ENCODE measurements at regions of chr10 and their contacts with region 1.

Region 1: DNA sequence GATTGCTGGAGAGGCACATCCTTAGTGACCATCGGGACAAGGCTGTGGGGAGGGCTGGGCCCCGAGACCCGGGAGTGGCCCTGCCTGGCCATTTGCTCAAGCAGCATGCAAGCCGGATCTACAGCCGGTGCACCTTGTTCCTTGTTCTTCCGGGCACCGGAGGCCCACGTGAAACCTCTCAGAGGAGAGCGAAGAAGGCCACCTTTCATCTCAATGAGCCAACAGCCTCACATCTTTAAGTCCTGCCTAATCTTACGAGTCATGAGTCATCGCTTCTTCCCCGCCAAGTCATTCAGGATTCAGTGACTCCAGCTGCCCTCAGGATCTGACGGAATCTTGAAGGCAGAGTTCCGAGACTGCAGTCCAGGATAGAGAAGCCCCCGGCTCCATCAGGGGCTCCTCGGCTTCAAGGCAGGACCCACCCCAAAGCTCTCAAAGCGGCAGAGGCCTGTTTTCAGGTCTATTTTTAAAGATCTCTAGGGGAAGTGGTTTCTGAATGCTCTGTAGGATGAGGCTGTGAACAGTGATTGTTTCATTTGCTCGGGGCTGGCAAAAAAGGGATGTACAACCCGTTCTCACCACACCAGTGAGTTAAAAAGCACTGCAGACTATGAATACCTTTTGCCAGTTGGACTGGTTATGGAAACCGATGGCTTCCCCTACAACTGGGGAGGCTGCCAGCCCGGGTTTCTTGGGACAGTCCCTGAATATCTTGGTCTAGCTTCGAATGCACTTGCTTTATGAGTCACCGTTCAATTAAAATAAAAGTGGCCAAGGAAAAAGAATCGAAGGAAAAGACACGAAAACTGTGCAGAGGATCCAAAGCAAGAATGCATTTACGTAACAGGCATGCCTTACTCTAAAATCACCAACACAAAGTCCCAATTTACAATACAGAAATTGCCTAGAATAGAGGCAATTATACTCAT is 57.2 kb upstream of the ECHDC3 start:
- DNase-seq: peak; percentile 91
- ATAC-seq: peak; percentile 74
- H3K4me3 ChIP-seq: peak overlapping the region; percentile 39 to 63 (median 58)
- H3K4me3 Mint-ChIP-seq: peak overlapping the region; percentile 93
- H3K27ac ChIP-seq: peak overlapping the region; percentile 96 to 98
- H3K27ac Mint-ChIP-seq: peak overlapping the region; percentile 99
- H3K4me1 ChIP-seq: peaks cover 81 to 90% of the 10 kb centered on the region in 2 donors
- H3K4me1 Mint-ChIP-seq: peaks cover 90% of the 10 kb centered on the region
- H3K27me3 ChIP-seq: no peaks in the 10 kb centered on the region
- H3K27me3 Mint-ChIP-seq: no peaks in the 10 kb centered on the region
- CTCF ChIP-seq: no peak

Region 2: GRCh38 chr10:11424456-11425297 is 260.3 kb before region 1 on chr10:
- CTCF ChIA-PET with region 1: no interaction called
- POLR2A ChIA-PET with region 1: no interaction called
- intact Hi-C with region 1: no loop called
- DNase-seq: peak; percentile 28
- ATAC-seq: no peak
- H3K4me3 ChIP-seq: no peak overlapping the region
- H3K4me3 Mint-ChIP-seq: no peak overlapping the region
- H3K27ac ChIP-seq: no peak overlapping the region
- H3K27ac Mint-ChIP-seq: no peak overlapping the region
- H3K4me1 ChIP-seq: no peaks in the 10 kb centered on the region
- H3K4me1 Mint-ChIP-seq: no peaks in the 10 kb centered on the region
- H3K27me3 ChIP-seq: no peaks in the 10 kb centered on the region
- H3K27me3 Mint-ChIP-seq: no peaks in the 10 kb centered on the region
- CTCF ChIP-seq: peak; percentile 65

Region 3: DNA sequence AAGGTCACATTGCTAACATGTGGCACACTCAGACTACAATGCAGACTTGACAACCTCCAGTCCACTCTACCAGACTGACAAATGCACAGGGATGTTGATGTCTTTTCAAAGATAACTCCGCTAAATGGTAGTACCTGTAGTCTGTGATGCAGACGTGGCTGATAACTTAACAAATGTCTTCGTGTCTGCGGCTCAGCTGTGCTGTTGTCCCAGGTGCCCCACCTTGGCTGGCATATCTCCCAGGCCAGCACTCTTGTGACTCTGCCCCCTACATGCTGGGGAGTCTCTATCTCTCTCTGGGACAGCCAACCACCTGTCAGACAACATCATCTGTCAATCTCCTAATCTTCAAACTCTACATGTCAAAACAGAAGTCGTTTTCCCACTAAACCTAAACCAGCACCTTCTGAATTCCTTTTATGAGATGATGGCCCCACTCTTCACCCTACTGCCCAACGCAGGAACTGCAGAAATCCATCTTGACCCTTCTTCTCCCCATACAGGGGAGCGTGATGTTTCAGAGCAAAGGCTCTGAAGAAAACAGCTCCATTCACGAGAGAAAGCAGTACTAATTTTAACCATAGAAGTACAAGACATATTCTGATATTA is 229.9 kb before region 1 on chr10:
- CTCF ChIA-PET with region 1: no interaction called
- POLR2A ChIA-PET with region 1: no interaction called
- intact Hi-C with region 1: no loop called
- DNase-seq: no peak
- ATAC-seq: no peak
- H3K4me3 ChIP-seq: no peak overlapping the region
- H3K4me3 Mint-ChIP-seq: no peak overlapping the region
- H3K27ac ChIP-seq: no peak overlapping the region
- H3K27ac Mint-ChIP-seq: peak overlapping the region; percentile 12
- H3K4me1 ChIP-seq: peaks cover under 1 to 5% of the 10 kb centered on the region in 2 donors
- H3K4me1 Mint-ChIP-seq: peaks cover 6% of the 10 kb centered on the region
- H3K27me3 ChIP-seq: no peaks in the 10 kb centered on the region
- H3K27me3 Mint-ChIP-seq: no peaks in the 10 kb centered on the region
- CTCF ChIP-seq: peak; percentile 12

Region 4: GRCh38 chr10:11515596-11516430 is 169.2 kb before region 1 on chr10:
- CTCF ChIA-PET with region 1: interaction called, 10 read pairs
- POLR2A ChIA-PET with region 1: interaction called, 9 read pairs
- intact Hi-C with region 1: no loop called
- DNase-seq: peak; percentile 79
- ATAC-seq: peak; percentile 84
- H3K4me3 ChIP-seq: peak overlapping the region in 1 of 5 experiments; percentile 2
- H3K4me3 Mint-ChIP-seq: peak overlapping the region; percentile 18
- H3K27ac ChIP-seq: peak overlapping the region in 1 of 2 donors; percentile 48
- H3K27ac Mint-ChIP-seq: peak overlapping the region; percentile 80
- H3K4me1 ChIP-seq: peaks cover 22% of the 10 kb centered on the region in 2 donors
- H3K4me1 Mint-ChIP-seq: peaks cover 46% of the 10 kb centered on the region
- H3K27me3 ChIP-seq: no peaks in the 10 kb centered on the region
- H3K27me3 Mint-ChIP-seq: no peaks in the 10 kb centered on the region
- CTCF ChIP-seq: peak; percentile 97

Region 5: DNA sequence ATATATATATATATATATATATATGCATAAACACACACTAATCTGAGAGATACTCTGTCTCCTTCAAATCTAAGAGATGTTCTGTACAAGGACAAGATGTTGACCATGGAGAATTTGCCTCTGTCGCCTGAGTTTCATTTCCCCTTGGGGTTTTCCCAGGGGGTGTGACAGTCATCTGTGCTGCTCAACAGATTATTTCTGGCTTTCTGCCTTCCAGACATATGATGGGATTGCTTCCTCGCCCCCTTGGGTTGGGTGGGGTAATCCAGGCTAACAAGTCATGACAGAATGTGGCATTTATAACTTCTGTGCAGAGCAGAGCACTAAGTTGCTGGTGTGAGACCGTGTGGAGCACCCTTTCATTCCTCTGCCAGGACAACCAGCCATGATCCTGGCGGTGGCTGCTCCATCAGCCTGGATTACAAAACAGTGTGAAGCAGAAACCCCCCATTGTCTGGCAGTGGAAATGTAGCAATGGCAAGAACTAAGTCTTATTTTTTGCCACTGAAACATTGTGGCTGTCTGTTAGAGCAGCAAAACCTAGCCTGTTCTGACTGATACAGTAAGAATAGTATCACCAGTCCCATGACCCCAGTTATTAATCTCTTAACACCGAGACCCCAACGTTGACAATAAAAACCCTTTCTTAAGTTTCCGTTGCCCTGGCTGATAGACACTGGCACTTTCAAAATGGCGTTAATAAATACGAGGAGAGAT is 59.8 kb before region 1 on chr10:
- CTCF ChIA-PET with region 1: no interaction called
- POLR2A ChIA-PET with region 1: no interaction called
- intact Hi-C with region 1: loop called (anchors 1 kb)
- DNase-seq: peak; percentile 89
- ATAC-seq: peak; percentile 94
- H3K4me3 ChIP-seq: peak overlapping the region in 2 of 5 experiments; percentile 26 to 35
- H3K4me3 Mint-ChIP-seq: peak overlapping the region; percentile 76
- H3K27ac ChIP-seq: peak overlapping the region; percentile 75 to 78
- H3K27ac Mint-ChIP-seq: peak overlapping the region; percentile 92
- H3K4me1 ChIP-seq: peaks cover 27 to 28% of the 10 kb centered on the region in 2 donors
- H3K4me1 Mint-ChIP-seq: peaks cover 50% of the 10 kb centered on the region
- H3K27me3 ChIP-seq: no peaks in the 10 kb centered on the region
- H3K27me3 Mint-ChIP-seq: no peaks in the 10 kb centered on the region
- CTCF ChIP-seq: no peak

Region 6: GRCh38 chr10:11698691-11699549 is 13.9 kb after region 1 on chr10:
- CTCF ChIA-PET with region 1: interaction called, 7 read pairs
- POLR2A ChIA-PET with region 1: interaction called, 6 read pairs
- intact Hi-C with region 1: loop called (anchors 1 kb)
- DNase-seq: peak; percentile 71
- ATAC-seq: peak; percentile 75
- H3K4me3 ChIP-seq: peak overlapping the region in 1 of 5 experiments; percentile 8
- H3K4me3 Mint-ChIP-seq: peak overlapping the region; percentile 46
- H3K27ac ChIP-seq: peak overlapping the region; percentile 25 to 70
- H3K27ac Mint-ChIP-seq: peak overlapping the region; percentile 73
- H3K4me1 ChIP-seq: peaks cover 41 to 64% of the 10 kb centered on the region in 2 donors
- H3K4me1 Mint-ChIP-seq: peaks cover 60% of the 10 kb centered on the region
- H3K27me3 ChIP-seq: no peaks in the 10 kb centered on the region
- H3K27me3 Mint-ChIP-seq: no peaks in the 10 kb centered on the region
- CTCF ChIP-seq: no peak

Region 7: GRCh38 chr10:11719496-11720217 is 34.7 kb after region 1 on chr10:
- CTCF ChIA-PET with region 1: interaction called, 25 read pairs
- POLR2A ChIA-PET with region 1: interaction called, 6 read pairs
- intact Hi-C with region 1: loop called (anchors 2 kb)
- DNase-seq: no peak
- ATAC-seq: no peak
- H3K4me3 ChIP-seq: no peak overlapping the region
- H3K4me3 Mint-ChIP-seq: peak overlapping the region; percentile 52
- H3K27ac ChIP-seq: no peak overlapping the region
- H3K27ac Mint-ChIP-seq: peak overlapping the region; percentile 75
- H3K4me1 ChIP-seq: peaks cover 34 to 47% of the 10 kb centered on the region in 2 donors
- H3K4me1 Mint-ChIP-seq: peaks cover 57% of the 10 kb centered on the region
- H3K27me3 ChIP-seq: no peaks in the 10 kb centered on the region
- H3K27me3 Mint-ChIP-seq: no peaks in the 10 kb centered on the region
- CTCF ChIP-seq: no peak

Region 8: GRCh38 chr10:12077580-12078180 is 392.7 kb after region 1 on chr10:
- CTCF ChIA-PET with region 1: no interaction called
- POLR2A ChIA-PET with region 1: no interaction called
- intact Hi-C with region 1: no loop called
- DNase-seq: peak; percentile 81
- ATAC-seq: peak; percentile 73
- H3K4me3 ChIP-seq: no peak overlapping the region
- H3K4me3 Mint-ChIP-seq: peak overlapping the region; percentile 72
- H3K27ac ChIP-seq: peak overlapping the region; percentile 90
- H3K27ac Mint-ChIP-seq: peak overlapping the region; percentile 97
- H3K4me1 ChIP-seq: peaks cover 46 to 64% of the 10 kb centered on the region in 2 donors
- H3K4me1 Mint-ChIP-seq: peaks cover 54% of the 10 kb centered on the region
- H3K27me3 ChIP-seq: no peaks in the 10 kb centered on the region
- H3K27me3 Mint-ChIP-seq: no peaks in the 10 kb centered on the region
- CTCF ChIP-seq: no peak

Measured in B cell (primary cell).